ENCODE measurements at regions of chr17 and their contacts with region 1.

Region 1: GRCh38 chr17:43576563-43577229 is 30.6 kb upstream of the ETV4 start:
- DNase-seq: peak; percentile 64 to 80
- H3K4me3 ChIP-seq: no peak overlapping the region
- H3K4me1 ChIP-seq: no peaks in the 10 kb centered on the region
- H3K27me3 ChIP-seq: no peaks in the 10 kb centered on the region

Region 2: DNA sequence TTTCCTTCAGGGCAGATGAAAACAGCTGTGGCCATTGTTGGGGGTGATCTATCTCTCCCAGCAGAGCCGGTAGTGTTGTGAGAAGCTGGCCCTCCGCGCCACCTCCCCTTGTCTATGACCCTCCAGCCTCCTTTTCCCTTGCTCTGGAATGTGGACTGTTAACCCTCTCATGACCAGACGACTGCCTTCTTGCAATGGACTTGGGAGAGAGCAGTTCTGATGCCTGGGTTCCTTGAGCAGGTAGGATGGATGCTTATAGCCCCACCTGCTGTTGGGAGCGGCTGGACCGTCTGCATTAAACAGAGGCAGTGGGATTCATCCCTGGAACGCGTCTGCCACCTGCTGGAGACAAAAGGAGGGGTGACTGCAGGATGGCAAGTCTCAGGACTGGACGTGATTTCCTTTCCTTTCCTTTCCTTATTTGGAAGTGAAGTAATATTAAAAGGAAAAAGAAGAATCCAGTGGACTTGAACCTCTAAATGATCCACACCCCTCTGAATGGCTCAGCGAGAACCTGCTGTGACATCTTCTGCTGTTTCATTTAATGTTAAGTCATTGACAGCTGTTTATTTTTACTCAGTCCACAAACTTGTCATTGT is 183.7 kb after region 1 on chr17:
- in situ Hi-C with region 1: loop called (anchors 5 kb)
- DNase-seq: peak; percentile 86 to 97
- H3K4me3 ChIP-seq: no peak overlapping the region
- H3K4me1 ChIP-seq: peaks cover 2% of the 10 kb centered on the region; the same call in 1 of the 2 replicates
- H3K27me3 ChIP-seq: no peaks in the 10 kb centered on the region